Naive thymus-derived CD4-positive, alpha-beta T cell (primary cell): ENCODE measurements at regions of chr10 and their contacts with region 1.

Region 1: GRCh38 chr10:3972460-3973301 is 187.7 kb upstream of the KLF6 start:
- DNase-seq: peak in 7 of 9 donors; percentile 8 to 47 (median 35)
- ATAC-seq: peak; percentile 89
- H3K4me3 ChIP-seq: peak overlapping the region; percentile 36
- H3K4me3 Mint-ChIP-seq: peak overlapping the region; percentile 63 to 89 (median 82)
- H3K27ac ChIP-seq: peak overlapping the region; percentile 66
- H3K27ac Mint-ChIP-seq: peak overlapping the region; percentile 86 to 98 (median 96)
- H3K4me1 ChIP-seq: peaks cover 56 to 71% of the 10 kb centered on the region in 2 donors
- H3K4me1 Mint-ChIP-seq: peaks cover 38 to 61% (median 54%) of the 10 kb centered on the region in 7 donors
- H3K27me3 ChIP-seq: no peaks in the 10 kb centered on the region
- H3K27me3 Mint-ChIP-seq: no peaks in the 10 kb centered on the region

Region 2: GRCh38 chr10:3208481-3209406 is 763.9 kb before region 1 on chr10:
- CTCF ChIA-PET with region 1: no interaction called
- POLR2A ChIA-PET with region 1: no interaction called
- intact Hi-C with region 1: no loop called
- DNase-seq: no peak
- ATAC-seq: no peak
- H3K4me3 ChIP-seq: no peak overlapping the region
- H3K4me3 Mint-ChIP-seq: no peak overlapping the region
- H3K27ac ChIP-seq: no peak overlapping the region
- H3K27ac Mint-ChIP-seq: no peak overlapping the region
- H3K4me1 ChIP-seq: no peaks in the 10 kb centered on the region
- H3K4me1 Mint-ChIP-seq: peaks cover 0 to 6% (median 0%) of the 10 kb centered on the region in 7 donors
- H3K27me3 ChIP-seq: no peaks in the 10 kb centered on the region
- H3K27me3 Mint-ChIP-seq: peaks cover 4 to 67% (median 22%) of the 10 kb centered on the region in 5 donors

Region 3: GRCh38 chr10:3408603-3409365 is 563.9 kb before region 1 on chr10:
- CTCF ChIA-PET with region 1: no interaction called
- POLR2A ChIA-PET with region 1: no interaction called
- intact Hi-C with region 1: no loop called
- DNase-seq: no peak
- ATAC-seq: no peak
- H3K4me3 ChIP-seq: no peak overlapping the region
- H3K4me3 Mint-ChIP-seq: no peak overlapping the region
- H3K27ac ChIP-seq: no peak overlapping the region
- H3K27ac Mint-ChIP-seq: no peak overlapping the region
- H3K4me1 ChIP-seq: no peaks in the 10 kb centered on the region
- H3K4me1 Mint-ChIP-seq: peaks cover 0 to 8% (median 0%) of the 10 kb centered on the region in 7 donors
- H3K27me3 ChIP-seq: no peaks in the 10 kb centered on the region
- H3K27me3 Mint-ChIP-seq: peaks cover 0 to 14% (median 4%) of the 10 kb centered on the region in 5 donors

Region 4: GRCh38 chr10:3668276-3668965 is 304.3 kb before region 1 on chr10:
- CTCF ChIA-PET with region 1: no interaction called
- POLR2A ChIA-PET with region 1: no interaction called
- intact Hi-C with region 1: loop called in 1 of 2 experiments (anchors 10 kb)
- DNase-seq: peak; percentile 34 to 85 (median 77)
- ATAC-seq: peak; percentile 91
- H3K4me3 ChIP-seq: peak overlapping the region; percentile 63
- H3K4me3 Mint-ChIP-seq: peak overlapping the region; percentile 82 to 98 (median 88)
- H3K27ac ChIP-seq: peak overlapping the region; percentile 65
- H3K27ac Mint-ChIP-seq: peak overlapping the region; percentile 36 to 96 (median 93)
- H3K4me1 ChIP-seq: peaks cover 33% of the 10 kb centered on the region in 2 donors
- H3K4me1 Mint-ChIP-seq: peaks cover 27 to 51% (median 40%) of the 10 kb centered on the region in 7 donors
- H3K27me3 ChIP-seq: no peaks in the 10 kb centered on the region
- H3K27me3 Mint-ChIP-seq: no peaks in the 10 kb centered on the region

Region 5: DNA sequence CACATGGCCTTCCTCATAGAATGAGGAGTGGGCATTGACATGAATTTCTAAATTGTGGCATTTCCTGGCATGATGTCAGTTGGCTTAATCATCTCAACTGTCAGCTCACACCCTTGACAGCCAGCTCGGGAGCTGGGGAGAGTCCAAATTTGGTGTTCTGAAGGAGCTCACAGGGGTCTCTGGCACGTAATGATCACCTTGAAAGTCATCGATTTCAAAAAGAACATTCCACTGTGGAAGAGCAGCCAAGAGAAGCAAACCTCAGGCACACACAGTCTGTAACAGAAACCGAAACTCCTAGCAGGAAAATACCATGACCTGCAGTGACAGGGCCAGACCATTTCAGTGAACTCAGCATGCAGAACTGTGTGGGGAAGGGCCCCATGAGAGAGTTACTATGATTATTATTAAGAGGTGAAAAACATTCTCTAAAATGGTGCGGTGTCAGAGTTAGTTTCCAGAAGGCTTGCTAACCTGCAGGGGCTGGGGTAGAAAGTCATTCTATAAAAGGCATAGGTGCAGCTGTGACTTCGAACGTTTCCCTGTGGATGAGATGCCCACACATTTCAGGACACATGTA is 161.3 kb before region 1 on chr10:
- CTCF ChIA-PET with region 1: no interaction called
- POLR2A ChIA-PET with region 1: interaction called, 3 read pairs
- intact Hi-C with region 1: loop called in 1 of 2 experiments (anchors 2 kb)
- DNase-seq: peak in 6 of 9 donors; percentile 22 to 54 (median 32)
- ATAC-seq: peak; percentile 62
- H3K4me3 ChIP-seq: peak overlapping the region; percentile 33
- H3K4me3 Mint-ChIP-seq: peak overlapping the region; percentile 10 to 85 (median 70)
- H3K27ac ChIP-seq: peak overlapping the region; percentile 71
- H3K27ac Mint-ChIP-seq: peak overlapping the region in 6 of 9 donors; percentile 67 to 91 (median 88)
- H3K4me1 ChIP-seq: peaks cover 52 to 65% of the 10 kb centered on the region in 2 donors
- H3K4me1 Mint-ChIP-seq: peaks cover 41 to 80% (median 63%) of the 10 kb centered on the region in 7 donors
- H3K27me3 ChIP-seq: no peaks in the 10 kb centered on the region
- H3K27me3 Mint-ChIP-seq: no peaks in the 10 kb centered on the region

Region 6: DNA sequence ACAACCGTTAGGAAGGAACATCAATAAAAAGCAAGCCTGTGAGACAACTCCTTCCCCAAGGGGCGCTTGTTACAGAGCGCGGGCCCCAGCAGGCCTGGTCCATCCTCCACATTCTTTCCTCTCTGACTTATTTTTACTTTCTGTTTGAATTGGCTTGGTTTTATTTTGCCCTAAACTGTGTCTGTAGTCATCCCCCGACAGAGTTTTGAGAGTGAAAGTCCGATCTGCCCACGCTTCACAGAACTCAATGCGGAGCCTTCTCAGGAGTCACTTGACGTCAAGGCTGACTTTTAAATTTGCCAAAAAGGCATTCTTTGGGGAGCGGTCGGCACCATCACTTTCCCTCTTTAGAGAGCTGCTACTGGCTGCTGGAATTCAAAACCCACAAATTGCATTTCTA is 37.5 kb before region 1 on chr10:
- CTCF ChIA-PET with region 1: interaction called, 3 read pairs
- POLR2A ChIA-PET with region 1: interaction called, 4 read pairs
- intact Hi-C with region 1: loop called in 1 of 2 experiments (anchors 1 kb)
- DNase-seq: peak in 6 of 9 donors; percentile 4 to 73 (median 22)
- ATAC-seq: peak; percentile 84
- H3K4me3 ChIP-seq: peak overlapping the region; percentile 32
- H3K4me3 Mint-ChIP-seq: peak overlapping the region; percentile 43 to 83 (median 78)
- H3K27ac ChIP-seq: peak overlapping the region; percentile 43
- H3K27ac Mint-ChIP-seq: peak overlapping the region; percentile 67 to 95 (median 86)
- H3K4me1 ChIP-seq: peaks cover 0 to 5% of the 10 kb centered on the region in 2 donors
- H3K4me1 Mint-ChIP-seq: peaks cover 11 to 61% (median 17%) of the 10 kb centered on the region in 7 donors
- H3K27me3 ChIP-seq: no peaks in the 10 kb centered on the region
- H3K27me3 Mint-ChIP-seq: no peaks in the 10 kb centered on the region

Region 7: DNA sequence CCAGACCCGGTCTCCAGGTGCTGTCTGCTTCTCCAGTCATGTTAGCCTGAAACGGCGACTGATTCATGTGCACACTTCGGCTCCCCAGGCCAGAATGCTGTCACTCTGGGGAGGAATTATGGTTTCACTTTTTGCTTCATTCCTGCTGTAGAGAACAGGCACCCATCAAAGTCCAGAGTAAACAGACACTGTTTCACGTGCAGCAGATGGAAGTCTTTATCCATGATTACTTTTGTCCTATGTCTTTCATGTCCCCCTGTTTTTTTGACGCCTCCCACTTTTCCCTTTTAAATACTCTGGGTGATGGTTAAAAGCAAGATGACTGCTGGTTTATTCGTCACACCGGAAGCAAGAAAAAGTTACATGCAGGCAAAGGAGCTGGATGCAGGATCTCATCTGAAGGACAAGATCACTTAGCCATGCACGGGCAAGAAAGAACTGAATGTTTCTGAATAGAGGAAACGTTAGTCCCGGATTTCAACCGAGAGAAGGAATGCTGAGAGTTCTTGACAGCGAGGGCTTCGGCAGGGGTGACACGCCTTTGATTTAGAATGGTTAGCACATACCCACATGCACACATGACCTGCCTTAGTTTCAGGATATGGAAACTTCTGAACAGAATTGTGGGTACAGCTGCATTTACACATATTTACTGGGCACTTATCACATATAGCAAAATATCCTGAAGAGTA is 62.4 kb after region 1 on chr10:
- CTCF ChIA-PET with region 1: no interaction called
- POLR2A ChIA-PET with region 1: no interaction called
- intact Hi-C with region 1: loop called (anchors 2 kb)
- DNase-seq: peak in 7 of 9 donors; percentile 6 to 41 (median 30)
- ATAC-seq: peak; percentile 78
- H3K4me3 ChIP-seq: peak overlapping the region; percentile 44
- H3K4me3 Mint-ChIP-seq: peak overlapping the region; percentile 73 to 91 (median 82)
- H3K27ac ChIP-seq: peak overlapping the region; percentile 22
- H3K27ac Mint-ChIP-seq: peak overlapping the region; percentile 67 to 91 (median 82)
- H3K4me1 ChIP-seq: peaks cover 4 to 11% of the 10 kb centered on the region in 2 donors
- H3K4me1 Mint-ChIP-seq: peaks cover 8 to 37% (median 17%) of the 10 kb centered on the region in 7 donors
- H3K27me3 ChIP-seq: no peaks in the 10 kb centered on the region
- H3K27me3 Mint-ChIP-seq: no peaks in the 10 kb centered on the region

Region 8: GRCh38 chr10:4459531-4459930 is 486.9 kb after region 1 on chr10:
- CTCF ChIA-PET with region 1: no interaction called
- POLR2A ChIA-PET with region 1: no interaction called
- intact Hi-C with region 1: no loop called
- DNase-seq: no peak
- ATAC-seq: no peak
- H3K4me3 ChIP-seq: no peak overlapping the region
- H3K4me3 Mint-ChIP-seq: no peak overlapping the region
- H3K27ac ChIP-seq: no peak overlapping the region
- H3K27ac Mint-ChIP-seq: no peak overlapping the region
- H3K4me1 ChIP-seq: no peaks in the 10 kb centered on the region
- H3K4me1 Mint-ChIP-seq: peaks cover 0 to 4% (median 0%) of the 10 kb centered on the region in 7 donors
- H3K27me3 ChIP-seq: no peaks in the 10 kb centered on the region
- H3K27me3 Mint-ChIP-seq: peaks cover 4 to 25% (median 14%) of the 10 kb centered on the region in 5 donors